ENCODE measurements at regions of chr14 and their contacts with region 1.

Region 1: DNA sequence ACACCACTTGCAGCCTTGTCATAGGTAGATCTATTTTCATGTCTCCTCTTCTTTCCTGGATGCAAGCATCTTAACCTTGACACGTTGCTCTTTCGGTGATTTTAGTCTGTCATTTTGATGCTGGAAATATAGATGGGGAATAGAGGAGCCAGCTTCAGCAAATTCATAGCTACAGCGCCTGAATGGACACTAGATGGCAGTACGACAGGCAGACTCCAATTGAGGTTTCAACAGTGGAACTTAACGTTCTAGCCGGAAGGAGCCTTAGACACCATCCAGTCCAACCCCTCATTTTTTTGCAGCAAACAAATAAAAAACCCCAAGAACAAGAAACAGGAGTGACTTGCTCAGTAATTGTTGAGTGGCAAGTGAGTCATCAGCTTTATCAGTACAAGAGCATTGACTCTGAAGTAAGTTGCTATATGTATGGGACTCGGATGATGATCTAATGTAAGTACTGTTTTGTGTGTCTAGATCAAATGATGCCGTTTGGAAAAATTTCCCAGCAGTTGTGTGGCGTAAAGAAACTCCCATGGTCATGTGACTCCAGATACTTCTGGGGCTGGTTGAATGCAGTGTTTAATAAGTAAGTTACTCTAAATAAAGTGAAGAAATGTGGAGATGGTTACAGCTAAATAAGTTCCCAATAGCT is 9.0 kb downstream of the DMAC2L start:
- DNase-seq: peak; percentile 99
- H3K4me3 ChIP-seq: no peak overlapping the region
- H3K27ac ChIP-seq: peak overlapping the region; percentile 95
- H3K4me1 ChIP-seq: peaks cover 26% of the 10 kb centered on the region
- H3K27me3 ChIP-seq: no peaks in the 10 kb centered on the region
- CTCF ChIP-seq: peak; percentile 87 to 91

Region 2: DNA sequence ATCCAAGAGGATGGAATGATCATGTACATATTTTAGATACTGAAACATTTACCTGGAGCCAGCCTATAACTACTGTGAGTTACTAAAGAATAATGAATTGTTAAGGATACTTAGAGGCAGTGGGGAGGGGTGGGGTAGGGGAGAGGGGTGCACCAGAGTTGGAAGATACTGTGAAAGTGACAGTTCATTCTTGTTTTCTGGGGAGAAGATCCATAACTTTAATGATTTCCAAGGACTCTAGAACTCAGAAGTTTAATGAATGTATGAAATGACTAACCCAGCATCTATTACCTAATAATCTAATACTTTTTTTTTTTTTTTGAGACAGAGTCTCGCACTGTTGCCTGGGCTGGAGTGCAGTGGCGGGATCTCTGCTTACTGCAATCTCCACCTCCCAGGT is 542.7 kb before region 1 on chr14:
- CTCF ChIA-PET with region 1: no interaction called
- dilution Hi-C with region 1: no loop called
- in situ Hi-C with region 1: no loop called
- intact Hi-C with region 1: no loop called
- DNase-seq: no peak
- H3K4me3 ChIP-seq: no peak overlapping the region
- H3K27ac ChIP-seq: no peak overlapping the region
- H3K4me1 ChIP-seq: no peaks in the 10 kb centered on the region
- H3K27me3 ChIP-seq: no peaks in the 10 kb centered on the region
- CTCF ChIP-seq: no peak

Region 3: GRCh38 chr14:50342221-50343078 is 21.3 kb after region 1 on chr14:
- CTCF ChIA-PET with region 1: interaction called, 5 read pairs
- dilution Hi-C with region 1: no loop called
- in situ Hi-C with region 1: no loop called
- intact Hi-C with region 1: loop called (anchors 1 kb)
- DNase-seq: peak; percentile 75
- H3K4me3 ChIP-seq: no peak overlapping the region
- H3K27ac ChIP-seq: peak overlapping the region; percentile 5
- H3K4me1 ChIP-seq: peaks cover 32% of the 10 kb centered on the region
- H3K27me3 ChIP-seq: no peaks in the 10 kb centered on the region
- CTCF ChIP-seq: peak; percentile 41 to 75

Region 4: GRCh38 chr14:50396631-50397390 is 75.7 kb after region 1 on chr14 and contains the start of gene CDKL1:
- CTCF ChIA-PET with region 1: no interaction called
- dilution Hi-C with region 1: no loop called
- in situ Hi-C with region 1: no loop called
- intact Hi-C with region 1: loop called (anchors 1 kb)
- DNase-seq: peak; percentile 76
- H3K4me3 ChIP-seq: peak within 1 kb of the TSS; percentile 60 to 67 (median 67)
- H3K27ac ChIP-seq: peak within 1 kb of the TSS; percentile 96
- H3K4me1 ChIP-seq: peaks cover 12% of the 10 kb centered on the region
- H3K27me3 ChIP-seq: no peaks in the 10 kb centered on the region
- CTCF ChIP-seq: no peak
- total RNA-seq, gene CDKL1: 13.7 to 14.1 TPM

Region 5: DNA sequence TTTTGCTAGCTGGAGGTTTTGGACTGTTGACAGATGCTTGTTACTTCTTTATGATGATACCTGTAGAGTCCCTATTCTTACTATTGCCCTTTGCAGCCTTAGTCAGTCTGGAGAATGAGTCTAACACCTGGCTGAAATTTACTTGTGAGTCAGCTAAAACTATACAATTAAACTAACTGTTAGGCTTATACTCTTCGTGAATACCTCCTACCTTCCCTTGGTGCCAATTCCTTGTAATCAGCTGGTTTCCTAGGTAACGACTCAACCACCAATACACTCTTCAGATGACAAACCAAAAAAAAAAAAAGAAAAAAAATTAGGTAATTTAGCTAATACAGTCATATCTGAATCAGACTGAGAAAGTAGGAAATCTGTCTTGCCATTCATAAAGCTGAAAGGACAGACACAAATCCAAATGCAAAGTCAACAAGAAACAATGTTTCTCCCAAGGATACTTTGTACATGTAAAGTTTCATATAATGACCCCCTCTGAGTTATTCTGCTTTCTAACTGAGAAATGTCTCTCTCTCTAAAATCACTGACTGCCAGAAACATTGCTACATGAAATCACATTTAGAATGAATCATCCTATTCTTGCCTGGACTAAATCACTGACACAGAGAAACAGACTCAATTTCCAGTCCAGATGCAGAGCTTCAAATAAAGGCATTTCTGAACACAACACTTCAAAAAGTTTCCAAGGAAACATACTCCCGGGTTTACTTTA is 132.0 kb after region 1 on chr14:
- CTCF ChIA-PET with region 1: no interaction called
- dilution Hi-C with region 1: no loop called
- in situ Hi-C with region 1: no loop called
- intact Hi-C with region 1: loop called (anchors 2 kb)
- DNase-seq: peak; percentile 98
- H3K4me3 ChIP-seq: no peak overlapping the region
- H3K27ac ChIP-seq: peak overlapping the region; percentile 95
- H3K4me1 ChIP-seq: peaks cover 16% of the 10 kb centered on the region
- H3K27me3 ChIP-seq: no peaks in the 10 kb centered on the region
- CTCF ChIP-seq: no peak

Region 6: GRCh38 chr14:50520947-50521815 is 200.0 kb after region 1 on chr14:
- CTCF ChIA-PET with region 1: no interaction called
- dilution Hi-C with region 1: loop called (anchors 25 kb)
- in situ Hi-C with region 1: loop called in 1 of 2 experiments (anchors 10 kb)
- intact Hi-C with region 1: no loop called
- DNase-seq: peak; percentile 93
- H3K4me3 ChIP-seq: no peak overlapping the region
- H3K27ac ChIP-seq: peak overlapping the region; percentile 91
- H3K4me1 ChIP-seq: peaks cover 23% of the 10 kb centered on the region
- H3K27me3 ChIP-seq: no peaks in the 10 kb centered on the region
- CTCF ChIP-seq: no peak

Region 7: GRCh38 chr14:50667996-50668825 is 347.1 kb after region 1 on chr14 and contains the start of gene SAV1:
- CTCF ChIA-PET with region 1: no interaction called
- dilution Hi-C with region 1: no loop called
- in situ Hi-C with region 1: no loop called
- intact Hi-C with region 1: loop called (anchors 5 kb)
- DNase-seq: peak; percentile 81
- H3K4me3 ChIP-seq: peak within 1 kb of the TSS; percentile 73 to 91 (median 82)
- H3K27ac ChIP-seq: peak within 1 kb of the TSS; percentile 92
- H3K4me1 ChIP-seq: peaks cover 20% of the 10 kb centered on the region
- H3K27me3 ChIP-seq: no peaks in the 10 kb centered on the region
- CTCF ChIP-seq: peak in 1 of 2 donors; percentile 4
- total RNA-seq, gene SAV1: 53.3 to 63.5 TPM

Region 8: GRCh38 chr14:50778721-50779483 is 457.8 kb after region 1 on chr14:
- CTCF ChIA-PET with region 1: no interaction called
- dilution Hi-C with region 1: no loop called
- in situ Hi-C with region 1: loop called (anchors 10 to 25 kb)
- intact Hi-C with region 1: loop called (anchors 2 kb)
- DNase-seq: peak; percentile 18
- H3K4me3 ChIP-seq: no peak overlapping the region
- H3K27ac ChIP-seq: no peak overlapping the region
- H3K4me1 ChIP-seq: peaks cover 28% of the 10 kb centered on the region
- H3K27me3 ChIP-seq: no peaks in the 10 kb centered on the region
- CTCF ChIP-seq: no peak